ENCODE measurements at regions of chr14 and their contacts with region 1.

Region 1: DNA sequence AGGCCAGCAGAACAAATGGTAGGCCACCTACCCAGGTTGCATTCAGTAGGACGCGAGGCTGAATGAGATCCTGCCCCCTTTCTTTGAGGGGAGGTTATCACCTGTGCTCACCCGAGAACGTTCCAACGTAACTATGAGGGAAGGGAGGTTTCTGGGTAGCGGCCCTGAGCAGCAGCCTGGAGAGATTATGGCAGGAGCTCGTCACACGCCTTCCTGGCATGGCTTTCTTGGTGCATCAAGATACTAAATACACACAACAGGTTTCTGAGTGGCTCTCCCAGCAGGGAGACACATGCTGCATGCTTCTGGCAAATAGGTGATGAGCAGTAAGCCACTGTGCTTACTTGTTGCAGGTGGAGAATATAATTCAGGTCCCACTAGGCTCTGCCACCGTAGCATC is 147.7 kb downstream of the CALM1 start:
- DNase-seq: no peak
- ATAC-seq: no peak
- H3K4me3 ChIP-seq: no peak overlapping the region
- H3K27ac ChIP-seq: no peak overlapping the region
- H3K4me1 ChIP-seq: peaks cover 10% of the 10 kb centered on the region; the same call in 1 of the 2 replicates
- H3K27me3 ChIP-seq: no peaks in the 10 kb centered on the region
- CTCF ChIP-seq: no peak

Region 2: GRCh38 chr14:90331497-90332435 is 212.8 kb before region 1 on chr14 and contains the start of gene NRDE2:
- CTCF ChIA-PET with region 1: no interaction called
- POLR2A ChIA-PET with region 1: interaction called, 17 read pairs
- intact Hi-C with region 1: no loop called
- DNase-seq: peak; percentile 96
- ATAC-seq: peak; percentile 95
- H3K4me3 ChIP-seq: peak within 1 kb of the TSS; percentile 82
- H3K27ac ChIP-seq: peak within 1 kb of the TSS; percentile 59
- H3K4me1 ChIP-seq: peaks cover 16% of the 10 kb centered on the region
- H3K27me3 ChIP-seq: no peaks in the 10 kb centered on the region
- CTCF ChIP-seq: no peak
- total RNA-seq, gene NRDE2: 18.3 and 29.5 TPM in 2 replicates

Region 3: GRCh38 chr14:90434370-90435020 is 110.1 kb before region 1 on chr14:
- CTCF ChIA-PET with region 1: no interaction called
- POLR2A ChIA-PET with region 1: no interaction called
- intact Hi-C with region 1: no loop called
- DNase-seq: no peak
- ATAC-seq: no peak
- H3K4me3 ChIP-seq: no peak overlapping the region
- H3K27ac ChIP-seq: no peak overlapping the region
- H3K4me1 ChIP-seq: no peaks in the 10 kb centered on the region; the same call in 1 of the 2 replicates
- H3K27me3 ChIP-seq: no peaks in the 10 kb centered on the region
- CTCF ChIP-seq: no peak